Natural killer cell (primary cell): ENCODE measurements at regions of chr2 and their contacts with region 1.

Region 1: GRCh38 chr2:55718165-55719008 is 24.7 kb upstream of the PNPT1 start:
- DNase-seq: peak in 1 of 2 donors; percentile 69
- ATAC-seq: peak in 1 of 3 donors; percentile 52
- H3K4me3 ChIP-seq: no peak overlapping the region
- H3K4me3 Mint-ChIP-seq: no peak overlapping the region
- H3K27ac ChIP-seq: no peak overlapping the region
- H3K27ac Mint-ChIP-seq: no peak overlapping the region
- H3K4me1 ChIP-seq: no peaks in the 10 kb centered on the region
- H3K4me1 Mint-ChIP-seq: no peaks in the 10 kb centered on the region
- H3K27me3 ChIP-seq: no peaks in the 10 kb centered on the region
- H3K27me3 Mint-ChIP-seq: peaks cover 11 to 17% of the 10 kb centered on the region in 2 donors
- CTCF ChIP-seq: peak; percentile 76

Region 2: DNA sequence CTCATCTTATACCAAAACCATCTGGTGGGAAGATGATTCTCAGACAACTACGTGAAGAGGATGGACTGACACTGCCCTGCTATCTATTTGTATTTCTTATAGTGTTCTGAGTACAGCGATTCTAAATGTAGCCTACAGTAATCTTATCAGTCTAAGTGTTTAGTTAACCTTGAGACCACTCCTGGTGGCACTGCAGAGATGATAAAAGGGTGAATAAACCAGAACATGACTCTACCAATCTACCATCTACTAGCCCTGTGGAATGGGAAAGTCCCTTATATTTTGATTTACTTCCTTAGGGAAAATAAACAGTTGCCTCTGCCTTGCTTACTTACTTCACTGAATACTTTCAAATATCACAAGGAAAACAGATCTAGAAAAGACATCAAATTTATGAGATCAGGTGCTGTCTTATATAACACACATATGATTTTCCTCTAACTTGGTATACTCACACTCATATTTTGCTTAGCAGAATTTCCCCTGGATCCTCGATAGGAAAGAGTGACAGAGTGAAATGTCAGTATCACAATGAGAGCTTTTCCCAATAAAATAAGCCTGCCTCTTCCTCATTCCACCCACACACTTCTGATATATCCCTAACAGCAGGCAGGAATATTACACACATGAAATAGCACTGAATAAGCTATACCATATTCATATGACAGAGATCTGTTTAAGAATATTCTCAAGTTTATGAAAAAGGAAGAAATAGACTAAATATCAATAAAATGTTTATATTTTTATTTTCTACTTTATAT is 390.7 kb before region 1 on chr2:
- intact Hi-C with region 1: no loop called
- DNase-seq: no peak
- ATAC-seq: no peak
- H3K4me3 ChIP-seq: no peak overlapping the region
- H3K4me3 Mint-ChIP-seq: no peak overlapping the region
- H3K27ac ChIP-seq: no peak overlapping the region
- H3K27ac Mint-ChIP-seq: no peak overlapping the region
- H3K4me1 ChIP-seq: no peaks in the 10 kb centered on the region
- H3K4me1 Mint-ChIP-seq: no peaks in the 10 kb centered on the region
- H3K27me3 ChIP-seq: no peaks in the 10 kb centered on the region
- H3K27me3 Mint-ChIP-seq: no peaks in the 10 kb centered on the region
- CTCF ChIP-seq: no peak

Region 3: GRCh38 chr2:55804535-55804934 is 86.1 kb after region 1 on chr2:
- intact Hi-C with region 1: no loop called
- DNase-seq: no peak
- ATAC-seq: no peak
- H3K4me3 ChIP-seq: no peak overlapping the region
- H3K4me3 Mint-ChIP-seq: no peak overlapping the region
- H3K27ac ChIP-seq: no peak overlapping the region
- H3K27ac Mint-ChIP-seq: no peak overlapping the region
- H3K4me1 ChIP-seq: no peaks in the 10 kb centered on the region
- H3K4me1 Mint-ChIP-seq: no peaks in the 10 kb centered on the region
- H3K27me3 ChIP-seq: no peaks in the 10 kb centered on the region
- H3K27me3 Mint-ChIP-seq: no peaks in the 10 kb centered on the region
- CTCF ChIP-seq: no peak

Region 4: GRCh38 chr2:56014042-56014730 is 295.8 kb after region 1 on chr2:
- intact Hi-C with region 1: no loop called
- DNase-seq: no peak
- ATAC-seq: no peak
- H3K4me3 ChIP-seq: no peak overlapping the region
- H3K4me3 Mint-ChIP-seq: no peak overlapping the region
- H3K27ac ChIP-seq: no peak overlapping the region
- H3K27ac Mint-ChIP-seq: no peak overlapping the region
- H3K4me1 ChIP-seq: no peaks in the 10 kb centered on the region
- H3K4me1 Mint-ChIP-seq: no peaks in the 10 kb centered on the region
- H3K27me3 ChIP-seq: no peaks in the 10 kb centered on the region
- H3K27me3 Mint-ChIP-seq: peaks cover 0 to 8% of the 10 kb centered on the region in 2 donors
- CTCF ChIP-seq: no peak

Region 5: DNA sequence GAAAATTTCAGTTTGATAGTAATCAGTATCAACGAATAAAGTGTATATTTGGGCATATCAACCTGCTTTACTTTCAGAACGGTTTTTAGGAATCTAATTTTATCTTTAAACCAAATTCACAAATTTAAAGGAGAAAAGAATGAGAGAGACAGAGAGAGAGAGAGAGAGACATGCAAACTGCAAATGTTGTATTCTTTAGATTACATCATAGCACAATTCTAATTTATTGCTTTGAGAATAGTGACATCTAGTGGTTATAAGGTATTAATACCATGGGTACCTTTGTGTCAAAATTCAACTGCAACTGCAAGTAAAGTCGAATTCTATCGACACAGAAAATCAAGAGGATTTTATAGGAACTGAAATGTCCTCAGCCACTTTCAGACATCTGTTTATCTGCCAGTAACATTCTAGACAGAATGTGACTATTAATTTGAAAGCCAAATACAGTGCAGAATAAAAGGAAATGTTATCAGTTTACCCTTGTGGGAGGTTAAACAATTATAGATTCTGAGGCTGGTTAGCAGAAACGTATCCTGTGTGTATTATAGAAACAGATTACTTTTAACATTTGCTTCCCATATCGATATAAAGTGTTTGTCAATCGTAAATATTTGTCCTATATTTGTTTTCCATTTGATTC is 1798.4 kb after region 1 on chr2:
- intact Hi-C with region 1: loop called (anchors 10 kb)
- DNase-seq: peak in 1 of 2 donors; percentile 31
- ATAC-seq: peak in 1 of 3 donors; percentile 54
- H3K4me3 ChIP-seq: no peak overlapping the region
- H3K4me3 Mint-ChIP-seq: no peak overlapping the region
- H3K27ac ChIP-seq: no peak overlapping the region
- H3K27ac Mint-ChIP-seq: no peak overlapping the region
- H3K4me1 ChIP-seq: no peaks in the 10 kb centered on the region
- H3K4me1 Mint-ChIP-seq: no peaks in the 10 kb centered on the region
- H3K27me3 ChIP-seq: no peaks in the 10 kb centered on the region
- H3K27me3 Mint-ChIP-seq: no peaks in the 10 kb centered on the region
- CTCF ChIP-seq: peak; percentile 35